Uterus (tissue), 4 donors: ENCODE measurements at regions of chr3 and their contacts with region 1.

Region 1: DNA sequence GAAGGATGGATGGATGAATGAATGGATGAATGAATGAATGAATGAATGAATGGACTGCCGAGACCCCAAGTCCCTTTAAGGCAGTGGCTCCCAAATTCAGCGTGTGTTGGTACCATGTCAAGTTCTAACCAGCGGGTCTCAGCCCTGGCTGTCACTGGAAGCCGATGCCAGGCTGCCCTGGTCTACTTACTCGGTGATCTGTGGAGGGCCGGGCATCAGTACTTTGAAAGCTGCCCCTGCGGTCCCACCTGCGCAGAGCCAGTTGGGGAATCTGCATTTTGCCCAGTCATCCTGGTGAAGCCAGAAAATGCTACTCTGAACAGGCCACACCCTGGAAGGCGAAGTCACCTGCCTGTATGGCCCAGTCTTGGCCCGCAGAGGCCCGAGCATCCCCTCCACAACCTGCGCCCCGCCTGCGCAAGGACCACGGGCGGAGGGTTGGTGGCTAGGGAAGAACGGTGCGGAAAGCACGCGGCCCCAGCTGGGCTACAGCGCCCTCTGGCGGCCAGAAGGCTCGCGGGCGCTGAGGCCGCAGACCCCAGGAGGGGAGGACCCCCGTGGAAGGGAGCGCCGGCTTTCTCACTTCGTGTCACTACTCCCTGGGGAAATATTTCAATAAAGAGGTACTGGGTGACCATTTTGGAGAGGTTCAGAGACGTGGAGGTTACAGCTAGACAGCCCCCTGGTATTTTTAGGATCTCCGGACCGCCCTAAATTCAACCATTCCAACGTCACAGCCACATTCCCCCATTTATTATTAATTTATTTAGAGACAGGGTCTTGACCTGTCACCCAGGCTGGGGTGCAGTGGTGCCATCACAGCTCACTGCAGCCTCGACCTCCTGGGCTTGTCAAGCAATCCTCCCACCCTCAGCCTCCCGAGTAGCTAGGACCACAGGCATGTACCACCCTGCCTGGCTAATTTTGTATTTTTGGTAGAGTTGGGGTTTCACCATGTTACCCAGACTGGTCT is 34.9 kb downstream of the PRKCD start:
- DNase-seq: peak in 1 of 2 donors; percentile 44
- H3K4me3 ChIP-seq: no peak overlapping the region
- H3K27ac ChIP-seq: no peak overlapping the region
- H3K4me1 ChIP-seq: peaks cover 0 to 6% of the 10 kb centered on the region in 2 donors
- H3K27me3 ChIP-seq: no peaks in the 10 kb centered on the region
- CTCF ChIP-seq: peak; percentile 89 to 99 (median 96)
- POLR2A ChIP-seq: no peak

Region 2: DNA sequence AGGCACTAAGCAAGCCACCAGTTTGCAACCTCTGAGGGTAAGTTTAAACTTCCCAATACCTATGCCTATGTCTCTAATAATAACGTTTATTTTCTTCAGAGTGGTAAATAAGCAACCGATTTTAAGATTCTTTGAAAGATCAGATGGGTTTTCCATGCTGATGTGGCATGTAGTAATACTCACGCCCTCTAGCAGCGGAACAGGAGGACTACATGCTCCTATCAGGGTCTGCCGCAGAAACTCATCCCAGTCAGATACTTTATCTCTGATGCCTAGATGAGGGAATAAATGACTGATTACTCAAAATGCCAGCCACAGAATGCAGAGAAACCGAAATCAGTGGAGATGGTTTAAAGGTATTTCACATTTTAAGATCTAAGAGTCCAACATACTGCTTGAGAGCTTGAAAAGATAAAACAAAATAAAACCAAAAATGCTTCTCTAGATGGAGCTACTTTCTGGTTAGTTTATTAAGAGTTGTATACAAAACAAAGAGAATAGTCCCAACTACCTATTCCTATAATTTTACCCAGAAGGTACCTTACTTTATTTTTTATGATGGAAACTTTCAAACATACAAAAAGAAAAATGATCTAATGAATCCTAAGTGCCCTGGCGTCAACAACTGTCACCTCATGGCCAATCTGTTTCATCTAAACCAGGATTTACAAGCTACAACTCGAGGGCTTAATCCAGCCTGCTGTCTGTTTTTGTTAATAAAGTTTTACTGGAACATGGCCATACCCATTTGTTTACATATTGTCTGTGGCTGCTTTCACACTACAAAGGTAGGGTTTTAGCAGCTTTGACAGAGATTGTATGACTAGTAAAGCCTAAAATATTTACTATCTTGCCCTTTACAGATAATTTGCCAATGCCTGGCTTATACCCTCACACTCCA is 261.0 kb before region 1 on chr3:
- intact Hi-C with region 1: no loop called
- DNase-seq: peak; percentile 19 to 28
- H3K4me3 ChIP-seq: no peak overlapping the region
- H3K27ac ChIP-seq: no peak overlapping the region
- H3K4me1 ChIP-seq: no peaks in the 10 kb centered on the region
- H3K27me3 ChIP-seq: no peaks in the 10 kb centered on the region
- CTCF ChIP-seq: peak; percentile 45 to 73 (median 64)
- POLR2A ChIP-seq: no peak

Region 3: DNA sequence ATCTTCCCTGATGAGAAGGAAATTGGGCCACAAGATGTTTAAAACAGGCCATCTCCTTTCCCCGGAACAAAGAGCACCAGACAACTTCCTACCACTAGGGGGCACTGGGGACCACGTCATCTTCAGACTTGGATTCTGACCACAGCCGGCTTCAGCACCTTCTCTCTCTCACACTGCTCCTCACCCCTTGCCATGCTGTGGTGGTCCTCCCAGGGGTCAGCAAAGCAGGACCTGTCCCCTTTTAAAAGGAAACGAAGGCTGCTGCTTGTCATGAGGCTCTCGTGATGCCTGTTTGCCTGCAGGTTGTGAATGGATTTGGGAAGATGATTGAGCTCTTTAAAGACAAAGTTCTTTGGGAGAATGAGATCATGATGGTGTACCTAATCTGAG is 81.9 kb before region 1 on chr3:
- intact Hi-C with region 1: loop called (anchors 2 kb)
- DNase-seq: peak; percentile 79 to 84
- H3K4me3 ChIP-seq: no peak overlapping the region
- H3K27ac ChIP-seq: peak overlapping the region in 1 of 2 donors; percentile 51
- H3K4me1 ChIP-seq: no peaks in the 10 kb centered on the region
- H3K27me3 ChIP-seq: no peaks in the 10 kb centered on the region
- CTCF ChIP-seq: peak; percentile 86 to 92 (median 89)
- POLR2A ChIP-seq: no peak